HCT116 (cell line): ENCODE measurements at regions of chr6 and their contacts with region 1.

Region 1: DNA sequence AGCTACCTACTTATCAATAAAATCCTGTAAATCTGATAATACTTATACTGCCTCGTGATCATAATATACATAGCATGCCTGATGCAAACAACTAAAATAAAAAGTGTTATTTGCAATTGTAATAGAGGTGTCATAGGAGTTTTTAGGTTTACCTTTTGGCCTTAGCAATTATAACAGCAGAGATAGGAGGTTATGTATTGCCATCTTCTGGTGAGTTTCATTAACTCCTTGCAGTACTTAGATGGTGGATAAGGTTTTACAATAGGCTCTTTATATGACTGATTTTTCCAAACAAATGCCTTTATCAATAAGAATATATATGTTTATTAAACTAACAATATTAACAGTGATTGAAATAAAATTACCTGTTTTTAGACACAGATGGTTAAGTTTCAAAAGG is 27.8 kb upstream of the MYCT1 start:
- DNase-seq: peak; percentile 33
- ATAC-seq: peak; percentile 81
- H3K4me3 ChIP-seq: no peak overlapping the region
- H3K27ac ChIP-seq: no peak overlapping the region
- H3K4me1 ChIP-seq: no peaks in the 10 kb centered on the region
- H3K27me3 ChIP-seq: no peaks in the 10 kb centered on the region
- CTCF ChIP-seq: peak; percentile 9 to 63 (median 52); a peak in 5 of 6 replicates
- POLR2A ChIP-seq: no peak
- RAD21 ChIP-seq: peak; percentile 72

Region 2: GRCh38 chr6:152267967-152268845 is 401.7 kb before region 1 on chr6:
- CTCF ChIA-PET with region 1: no interaction called
- POLR2A ChIA-PET with region 1: no interaction called
- RAD21 ChIA-PET with region 1: no interaction called
- intact Hi-C with region 1: loop called (anchors 10 kb)
- DNase-seq: no peak
- ATAC-seq: no peak
- H3K4me3 ChIP-seq: no peak overlapping the region
- H3K27ac ChIP-seq: no peak overlapping the region
- H3K4me1 ChIP-seq: no peaks in the 10 kb centered on the region
- H3K27me3 ChIP-seq: no peaks in the 10 kb centered on the region
- CTCF ChIP-seq: peak; percentile 43 to 71 (median 71); a peak in 4 of 6 replicates
- POLR2A ChIP-seq: no peak
- RAD21 ChIP-seq: peak; percentile 73

Region 3: DNA sequence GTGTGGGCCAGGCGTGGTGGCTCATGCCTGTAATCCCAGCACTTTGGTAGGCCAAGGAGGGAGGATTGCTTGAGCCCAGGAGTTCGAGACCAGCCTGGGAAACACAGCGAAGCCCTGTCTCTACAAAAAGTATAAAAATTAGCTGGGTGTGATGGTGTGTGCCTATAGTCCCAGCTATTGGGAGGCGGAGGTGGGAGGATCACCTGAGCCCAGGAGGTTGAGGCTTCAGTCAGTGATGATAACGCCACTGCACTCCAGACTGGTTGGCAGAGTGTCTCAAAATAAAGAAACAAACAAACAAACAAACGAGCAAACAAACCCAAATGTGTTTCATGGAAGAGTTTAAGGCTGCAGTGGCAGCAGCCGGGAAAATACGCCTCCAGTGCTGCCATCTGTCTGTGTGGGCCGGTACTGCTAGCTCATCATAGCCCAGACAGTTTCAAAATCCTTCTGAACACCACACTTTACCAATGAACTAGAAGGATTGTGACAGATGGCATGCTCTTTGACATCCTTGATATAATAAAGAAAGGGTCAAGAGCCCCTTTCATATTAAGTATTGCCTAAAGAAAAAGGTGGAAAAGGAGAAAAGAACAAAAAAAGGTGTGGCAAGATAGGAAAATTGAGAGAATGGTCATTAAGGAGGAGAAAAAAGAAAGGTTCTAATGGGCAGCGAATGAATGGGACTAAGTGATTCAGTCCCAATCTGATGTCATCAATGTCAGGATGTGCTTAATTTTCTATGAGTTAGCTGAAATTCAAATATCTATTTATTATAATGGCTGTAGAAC is 331.4 kb before region 1 on chr6:
- CTCF ChIA-PET with region 1: no interaction called
- POLR2A ChIA-PET with region 1: no interaction called
- RAD21 ChIA-PET with region 1: no interaction called
- intact Hi-C with region 1: loop called (anchors 1 kb)
- DNase-seq: no peak
- ATAC-seq: peak; percentile 93
- H3K4me3 ChIP-seq: no peak overlapping the region
- H3K27ac ChIP-seq: no peak overlapping the region
- H3K4me1 ChIP-seq: no peaks in the 10 kb centered on the region
- H3K27me3 ChIP-seq: no peaks in the 10 kb centered on the region
- CTCF ChIP-seq: peak; percentile 27 to 97 (median 91); a peak in 5 of 6 replicates
- POLR2A ChIP-seq: no peak
- RAD21 ChIP-seq: peak; percentile 59

Region 4: DNA sequence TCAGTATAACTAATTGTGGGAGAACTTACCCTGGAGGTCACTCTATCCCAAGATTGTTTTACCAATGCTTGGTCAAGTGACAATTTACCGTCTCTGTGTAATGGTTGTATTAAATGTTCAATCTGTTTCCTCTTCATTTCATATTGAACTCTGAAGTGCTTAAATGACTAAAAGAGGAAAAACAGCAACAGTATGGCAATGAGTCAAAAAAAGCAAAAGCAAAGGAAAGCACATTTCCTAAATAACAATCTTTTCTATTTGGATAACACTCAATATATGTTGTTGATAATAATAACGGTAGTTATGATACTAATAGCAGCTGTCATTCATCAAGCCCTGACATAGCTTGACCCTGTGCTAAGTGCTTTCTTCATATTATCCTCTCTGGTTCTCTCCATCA is 185.1 kb before region 1 on chr6:
- CTCF ChIA-PET with region 1: interaction called, 8 read pairs
- POLR2A ChIA-PET with region 1: no interaction called
- RAD21 ChIA-PET with region 1: no interaction called
- intact Hi-C with region 1: loop called (anchors 1 kb)
- DNase-seq: no peak
- ATAC-seq: no peak
- H3K4me3 ChIP-seq: no peak overlapping the region
- H3K27ac ChIP-seq: no peak overlapping the region
- H3K4me1 ChIP-seq: peaks cover 0 to 8% of the 10 kb centered on the region in 2 experiments; a peak in 2 of 4 replicates
- H3K27me3 ChIP-seq: no peaks in the 10 kb centered on the region
- CTCF ChIP-seq: no peak
- POLR2A ChIP-seq: no peak
- RAD21 ChIP-seq: no peak

Region 5: GRCh38 chr6:152552616-152553209 is 117.2 kb before region 1 on chr6:
- CTCF ChIA-PET with region 1: interaction called, 4 read pairs
- POLR2A ChIA-PET with region 1: no interaction called
- RAD21 ChIA-PET with region 1: no interaction called
- intact Hi-C with region 1: loop called (anchors 1 kb)
- DNase-seq: peak; percentile 70
- ATAC-seq: peak; percentile 100
- H3K4me3 ChIP-seq: no peak overlapping the region
- H3K27ac ChIP-seq: no peak overlapping the region
- H3K4me1 ChIP-seq: no peaks in the 10 kb centered on the region
- H3K27me3 ChIP-seq: no peaks in the 10 kb centered on the region
- CTCF ChIP-seq: peak; percentile 76 to 88 (median 82); a peak in 5 of 6 replicates
- POLR2A ChIP-seq: no peak
- RAD21 ChIP-seq: peak; percentile 83

Region 6: GRCh38 chr6:152680879-152681517 is 11.1 kb after region 1 on chr6:
- CTCF ChIA-PET with region 1: no interaction called
- POLR2A ChIA-PET with region 1: no interaction called
- RAD21 ChIA-PET with region 1: no interaction called
- intact Hi-C with region 1: no loop called
- DNase-seq: no peak
- ATAC-seq: no peak
- H3K4me3 ChIP-seq: no peak overlapping the region
- H3K27ac ChIP-seq: no peak overlapping the region
- H3K4me1 ChIP-seq: no peaks in the 10 kb centered on the region
- H3K27me3 ChIP-seq: no peaks in the 10 kb centered on the region; the same call in 1 of the 2 replicates
- CTCF ChIP-seq: no peak
- POLR2A ChIP-seq: no peak
- RAD21 ChIP-seq: no peak

Region 7: DNA sequence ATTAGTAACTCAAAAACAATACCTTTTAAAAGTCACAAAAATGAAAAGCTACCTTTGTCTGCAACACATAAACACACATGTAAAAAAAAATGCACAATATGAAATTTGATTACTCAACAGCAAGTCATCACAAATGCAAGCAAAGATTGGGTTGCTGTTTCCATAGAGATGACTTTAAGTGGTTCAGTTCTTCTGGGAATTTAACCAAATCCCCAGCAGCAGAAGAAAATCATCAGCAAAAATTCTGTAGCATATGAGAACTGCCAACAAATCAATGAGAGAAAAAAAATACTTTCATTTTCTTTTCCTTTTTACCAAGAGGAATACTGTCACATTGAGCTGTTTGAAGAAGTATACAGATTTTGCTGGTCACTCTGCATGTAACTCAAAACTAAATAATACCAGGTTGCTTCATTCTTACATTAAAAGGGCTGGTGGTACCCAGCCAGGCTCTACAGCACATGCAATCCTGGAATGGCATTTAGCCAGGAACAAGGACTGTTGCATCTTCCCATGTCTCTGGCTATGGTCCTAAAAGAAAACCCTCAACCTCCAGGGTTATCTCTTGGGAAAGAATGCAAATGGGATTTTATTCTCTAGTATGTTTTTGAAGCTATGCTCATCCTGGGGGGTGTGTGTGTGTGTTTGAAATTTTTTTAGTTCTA is 1527.4 kb after region 1 on chr6:
- CTCF ChIA-PET with region 1: no interaction called
- POLR2A ChIA-PET with region 1: no interaction called
- RAD21 ChIA-PET with region 1: no interaction called
- intact Hi-C with region 1: no loop called
- DNase-seq: no peak
- ATAC-seq: no peak
- H3K4me3 ChIP-seq: no peak overlapping the region
- H3K27ac ChIP-seq: no peak overlapping the region
- H3K4me1 ChIP-seq: no peaks in the 10 kb centered on the region
- H3K27me3 ChIP-seq: no peaks in the 10 kb centered on the region
- CTCF ChIP-seq: no peak
- POLR2A ChIP-seq: no peak
- RAD21 ChIP-seq: no peak